Activated CD8-positive, alpha-beta memory T cell treated with anti-CD3 and anti-CD28 coated beads, Interleukin-2, amount 10 ng/mL, durations not matched to agents 7 days and 5 days (primary cell): ENCODE measurements at regions of chr9 and their contacts with region 1.

Region 1: GRCh38 chr9:97954550-97954989 is 16.6 kb upstream of the HEMGN start:
- DNase-seq: peak; percentile 72
- ATAC-seq: peak; percentile 96
- H3K4me3 Mint-ChIP-seq: no peak overlapping the region
- H3K27ac Mint-ChIP-seq: no peak overlapping the region
- H3K4me1 Mint-ChIP-seq: peaks cover 7% of the 10 kb centered on the region
- H3K27me3 Mint-ChIP-seq: peaks cover 8% of the 10 kb centered on the region

Region 2: DNA sequence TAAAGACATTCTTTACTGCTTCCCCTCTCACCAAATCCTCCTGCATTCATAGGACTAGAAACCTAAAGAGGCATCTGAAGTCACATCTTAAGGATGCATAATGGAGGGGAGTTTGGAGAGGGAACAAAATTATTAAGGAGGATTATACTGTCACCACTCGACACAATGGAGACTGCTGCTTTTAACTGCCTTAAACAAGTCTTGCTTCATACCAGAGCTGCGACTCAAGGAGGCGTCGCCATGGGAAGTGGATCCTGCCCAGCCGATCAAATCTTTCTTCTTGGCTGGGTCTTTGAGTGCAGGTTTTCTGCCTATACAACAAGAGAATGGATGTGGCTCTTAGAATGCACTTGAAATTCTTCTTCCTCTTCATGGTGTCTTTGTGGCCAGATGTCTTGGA is 168.2 kb before region 1 on chr9:
- CTCF ChIA-PET with region 1: no interaction called
- DNase-seq: no peak
- ATAC-seq: no peak
- H3K4me3 Mint-ChIP-seq: no peak overlapping the region
- H3K27ac Mint-ChIP-seq: no peak overlapping the region
- H3K4me1 Mint-ChIP-seq: peaks cover 2% of the 10 kb centered on the region
- H3K27me3 Mint-ChIP-seq: peaks cover 14% of the 10 kb centered on the region

Region 3: GRCh38 chr9:97982683-97983588 is 28.4 kb after region 1 on chr9 and contains the start of gene ANP32B:
- CTCF ChIA-PET with region 1: interaction called, 11 read pairs
- DNase-seq: peak; percentile 96
- ATAC-seq: peak; percentile 85
- H3K4me3 Mint-ChIP-seq: peak within 1 kb of the TSS; percentile 79
- H3K27ac Mint-ChIP-seq: peak within 1 kb of the TSS; percentile 86
- H3K4me1 Mint-ChIP-seq: peaks cover 34% of the 10 kb centered on the region
- H3K27me3 Mint-ChIP-seq: no peaks in the 10 kb centered on the region
- total RNA-seq, gene ANP32B: 299 to 301 TPM

Region 4: DNA sequence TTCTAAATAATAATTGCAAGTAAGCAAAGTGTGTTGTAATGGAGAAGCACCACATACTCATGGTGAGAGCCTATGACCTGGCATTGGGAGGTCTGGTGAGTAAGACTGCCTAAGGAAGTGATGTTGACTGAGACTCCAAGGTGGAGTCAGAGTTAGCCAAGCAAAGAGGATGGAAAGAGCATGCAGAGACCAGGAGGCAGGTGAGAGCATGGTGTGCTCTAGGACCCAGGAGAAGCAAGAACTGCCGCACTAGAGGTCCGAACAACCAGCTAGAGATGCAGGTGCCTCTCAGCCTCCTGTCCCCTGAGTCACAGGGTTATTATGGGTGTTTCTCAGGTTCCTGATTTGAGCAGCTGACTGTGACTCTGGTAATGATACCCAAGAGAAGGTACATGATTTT is 55.9 kb after region 1 on chr9:
- CTCF ChIA-PET with region 1: no interaction called
- DNase-seq: no peak
- ATAC-seq: no peak
- H3K4me3 Mint-ChIP-seq: no peak overlapping the region
- H3K27ac Mint-ChIP-seq: no peak overlapping the region
- H3K4me1 Mint-ChIP-seq: peaks cover 23% of the 10 kb centered on the region
- H3K27me3 Mint-ChIP-seq: no peaks in the 10 kb centered on the region